Activated T-helper 1 cell treated with anti-CD3 and anti-CD28 coated beads, Interleukin-12 subunit alpha, Interleukin-12 subunit beta, Interleukin-2, Interleukin-4 antibody, amounts not matched to agents 30 ng/mL and 10 ng/mL and 1 ng/mL, durations not matched to agents 14 hours and 24 hours and 36 hours (primary cell): ENCODE measurements at regions of chr6 and their contacts with region 1.

Region 1: GRCh38 chr6:35681298-35681697 is 7.4 kb downstream of the FKBP5 start:
- DNase-seq: no peak
- H3K4me3 Mint-ChIP-seq: peak overlapping the region; percentile 8
- H3K27ac Mint-ChIP-seq: peak overlapping the region; percentile 72
- H3K4me1 Mint-ChIP-seq: peaks cover 39% of the 10 kb centered on the region
- H3K27me3 Mint-ChIP-seq: no peaks in the 10 kb centered on the region

Region 2: GRCh38 chr6:35663447-35664235 is 17.7 kb before region 1 on chr6:
- intact Hi-C with region 1: loop called (anchors 2 kb)
- DNase-seq: no peak
- H3K4me3 Mint-ChIP-seq: no peak overlapping the region
- H3K27ac Mint-ChIP-seq: no peak overlapping the region
- H3K4me1 Mint-ChIP-seq: peaks cover 11% of the 10 kb centered on the region
- H3K27me3 Mint-ChIP-seq: no peaks in the 10 kb centered on the region

Region 3: DNA sequence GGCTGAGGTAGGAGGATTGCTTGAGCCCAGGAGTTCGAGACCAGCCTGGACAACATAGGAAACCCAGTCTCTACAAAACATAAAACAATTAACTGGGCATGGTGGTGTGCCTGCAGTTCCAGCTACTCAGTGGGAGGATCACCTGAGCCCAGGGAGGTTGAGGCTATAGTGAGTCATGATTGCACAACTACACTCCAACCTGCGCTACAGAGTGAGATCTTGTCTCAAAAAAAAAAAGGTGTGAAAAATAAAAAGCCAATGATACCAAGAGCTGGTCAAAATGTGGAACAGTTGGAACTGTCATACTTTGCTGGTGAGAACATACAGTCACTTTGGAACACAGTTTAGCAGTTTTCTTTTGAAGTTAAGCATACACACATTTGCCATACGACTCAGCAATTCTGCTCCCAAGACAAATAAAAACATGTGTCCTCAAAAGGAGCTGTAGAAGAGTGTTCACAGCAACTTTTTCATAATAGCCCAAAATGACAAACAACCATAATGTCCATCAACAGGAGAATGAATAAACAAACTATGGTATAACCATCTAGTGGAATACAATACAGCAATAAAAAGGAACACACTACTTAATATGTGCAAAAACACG is 29.0 kb after region 1 on chr6:
- intact Hi-C with region 1: loop called (anchors 1 kb)
- DNase-seq: no peak
- H3K4me3 Mint-ChIP-seq: peak overlapping the region; percentile 50
- H3K27ac Mint-ChIP-seq: peak overlapping the region; percentile 82
- H3K4me1 Mint-ChIP-seq: peaks cover 50% of the 10 kb centered on the region
- H3K27me3 Mint-ChIP-seq: no peaks in the 10 kb centered on the region

Region 4: GRCh38 chr6:35719830-35720733 is 38.8 kb after region 1 on chr6:
- intact Hi-C with region 1: loop called (anchors 2 kb)
- DNase-seq: no peak
- H3K4me3 Mint-ChIP-seq: peak overlapping the region; percentile 55
- H3K27ac Mint-ChIP-seq: peak overlapping the region; percentile 86
- H3K4me1 Mint-ChIP-seq: peaks cover 62% of the 10 kb centered on the region
- H3K27me3 Mint-ChIP-seq: peaks cover 3% of the 10 kb centered on the region